HCT116 (cell line): ENCODE measurements at regions of chr19 and their contacts with region 1.

Region 1: GRCh38 chr19:18588611-18589379 is at the start of gene REX1BD:
- DNase-seq: no peak
- ATAC-seq: peak; percentile 71
- H3K4me3 ChIP-seq: peak within 1 kb of the TSS; percentile 67 to 89
- H3K27ac ChIP-seq: peak within 1 kb of the TSS; percentile 100
- H3K4me1 ChIP-seq: peaks cover 15 to 33% of the 10 kb centered on the region in 2 experiments
- H3K27me3 ChIP-seq: no peaks in the 10 kb centered on the region
- CTCF ChIP-seq: peak; percentile 72 to 93 (median 85)
- POLR2A ChIP-seq: peak; percentile 58
- RAD21 ChIP-seq: peak; percentile 38; the same call in 1 of the 2 replicates
- total RNA-seq, gene REX1BD: 97.1 TPM

Region 2: GRCh38 chr19:18521885-18522624 is 66.7 kb before region 1 on chr19 and contains the start of gene ELL:
- CTCF ChIA-PET with region 1: interaction called, 6 read pairs
- POLR2A ChIA-PET with region 1: no interaction called
- RAD21 ChIA-PET with region 1: no interaction called
- intact Hi-C with region 1: loop called (anchors 1 kb)
- DNase-seq: peak; percentile 99
- ATAC-seq: peak; percentile 89
- H3K4me3 ChIP-seq: peak within 1 kb of the TSS; percentile 92 to 94
- H3K27ac ChIP-seq: peak within 1 kb of the TSS; percentile 95
- H3K4me1 ChIP-seq: peaks cover 14 to 33% of the 10 kb centered on the region in 2 experiments
- H3K27me3 ChIP-seq: no peaks in the 10 kb centered on the region
- CTCF ChIP-seq: no peak
- POLR2A ChIP-seq: peak; percentile 68
- RAD21 ChIP-seq: no peak
- total RNA-seq, gene ELL: 22.9 TPM

Region 3: DNA sequence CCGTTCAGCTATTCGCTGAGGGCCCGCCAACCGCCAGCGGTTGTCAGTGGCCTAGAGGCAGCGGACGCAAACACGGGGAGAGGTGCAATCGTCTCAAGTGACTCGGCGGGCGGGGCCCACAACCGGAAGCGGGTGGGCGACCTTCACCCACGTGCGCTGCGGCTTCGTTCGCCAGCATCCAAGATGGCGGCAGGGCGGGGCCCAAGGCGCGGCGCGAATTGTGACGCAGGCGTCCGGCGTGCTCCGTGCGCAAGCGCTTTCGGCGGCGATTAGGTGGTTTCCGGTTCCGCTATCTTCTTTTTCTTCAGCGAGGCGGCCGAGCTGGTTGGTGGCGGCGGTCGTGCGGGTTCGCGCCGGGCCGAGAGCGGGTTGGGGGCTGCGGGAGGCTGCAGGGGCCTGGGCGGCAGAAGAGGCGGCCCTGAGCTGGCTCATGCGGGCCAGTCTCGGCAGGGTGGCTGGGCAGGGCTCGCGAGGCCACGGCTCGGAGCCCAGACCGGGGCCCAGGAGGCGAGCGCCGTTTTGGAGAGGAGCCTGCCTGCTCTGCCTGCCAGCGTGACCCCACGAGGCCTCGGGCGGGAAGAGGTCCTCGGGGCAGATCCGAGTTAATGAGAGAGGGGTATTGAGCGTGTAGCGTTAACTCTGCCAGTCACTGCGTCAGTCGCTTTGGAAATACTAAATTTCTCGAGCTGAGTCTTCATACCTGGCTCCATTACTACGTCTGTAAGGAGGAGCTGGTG is 17.1 kb before region 1 on chr19 and contains the start of gene UBA52:
- CTCF ChIA-PET with region 1: interaction called, 14 read pairs
- POLR2A ChIA-PET with region 1: interaction called, 23 read pairs
- RAD21 ChIA-PET with region 1: interaction called in 1 of 2 experiments, 4 read pairs
- intact Hi-C with region 1: no loop called
- DNase-seq: peak; percentile 96
- ATAC-seq: peak; percentile 92
- H3K4me3 ChIP-seq: peak within 1 kb of the TSS; percentile 100
- H3K27ac ChIP-seq: peak within 1 kb of the TSS; percentile 94
- H3K4me1 ChIP-seq: peaks cover 12 to 28% of the 10 kb centered on the region in 2 experiments
- H3K27me3 ChIP-seq: no peaks in the 10 kb centered on the region
- CTCF ChIP-seq: no peak
- POLR2A ChIP-seq: peak; percentile 90
- RAD21 ChIP-seq: peak; percentile 18; the same call in 1 of the 2 replicates
- total RNA-seq, gene UBA52: 1,743 TPM

Region 4: DNA sequence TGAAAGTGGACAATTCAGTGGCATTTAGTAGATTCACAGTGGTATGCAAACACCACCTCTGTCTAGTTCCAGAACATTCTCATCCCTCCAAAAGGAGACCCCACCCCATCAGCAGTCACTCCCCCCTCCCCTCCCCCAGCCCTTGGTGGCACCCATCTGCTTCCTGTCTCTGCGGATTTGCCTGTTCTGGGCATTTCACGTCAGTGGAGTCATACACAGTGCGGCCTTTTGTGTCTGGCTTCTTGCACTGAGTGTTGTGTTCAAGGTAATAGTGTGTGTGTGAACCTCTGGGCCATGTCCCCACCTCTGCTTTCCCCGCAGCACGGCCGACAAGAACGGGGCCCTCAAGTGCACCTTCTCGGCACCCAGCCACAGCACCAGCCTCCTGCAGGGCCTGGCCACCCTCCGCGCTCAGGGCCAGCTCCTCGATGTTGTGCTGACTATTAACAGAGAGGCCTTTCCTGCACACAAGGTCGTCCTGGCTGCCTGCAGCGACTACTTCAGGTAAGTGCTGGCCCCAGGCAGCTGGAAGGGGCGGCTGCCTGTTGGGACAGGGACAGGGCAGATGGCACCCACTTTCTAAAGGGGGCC is 75.2 kb after region 1 on chr19:
- CTCF ChIA-PET with region 1: no interaction called
- POLR2A ChIA-PET with region 1: no interaction called
- RAD21 ChIA-PET with region 1: no interaction called
- intact Hi-C with region 1: no loop called
- DNase-seq: no peak
- ATAC-seq: no peak
- H3K4me3 ChIP-seq: no peak overlapping the region
- H3K27ac ChIP-seq: no peak overlapping the region
- H3K4me1 ChIP-seq: peaks cover 16 to 26% of the 10 kb centered on the region in 2 experiments
- H3K27me3 ChIP-seq: no peaks in the 10 kb centered on the region
- CTCF ChIP-seq: no peak
- POLR2A ChIP-seq: no peak
- RAD21 ChIP-seq: no peak

Region 5: DNA sequence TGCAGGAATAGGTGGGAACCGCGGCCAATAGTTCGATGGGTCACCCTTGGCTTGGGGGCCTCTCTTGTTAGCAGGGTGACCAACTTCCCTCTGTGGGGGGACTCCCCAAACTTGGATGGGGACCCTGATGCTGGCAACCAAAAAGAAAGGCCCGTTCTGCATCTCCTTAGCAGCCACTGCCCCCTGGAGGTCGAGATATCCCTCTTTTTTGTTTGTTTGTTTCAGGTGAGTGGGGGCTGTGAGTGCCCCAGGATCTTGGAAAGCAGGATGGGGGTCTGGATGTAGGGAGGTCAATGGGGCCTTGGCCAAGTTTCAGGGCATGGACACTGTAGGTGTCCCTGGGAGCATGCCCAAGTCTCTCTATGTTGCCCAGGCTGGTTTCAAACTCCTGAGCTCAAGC is 87.0 kb after region 1 on chr19:
- CTCF ChIA-PET with region 1: interaction called, 7 read pairs
- POLR2A ChIA-PET with region 1: interaction called, 4 read pairs
- RAD21 ChIA-PET with region 1: interaction called in 1 of 2 experiments, 4 read pairs
- intact Hi-C with region 1: loop called (anchors 2 kb)
- DNase-seq: peak; percentile 10
- ATAC-seq: no peak
- H3K4me3 ChIP-seq: no peak overlapping the region
- H3K27ac ChIP-seq: no peak overlapping the region
- H3K4me1 ChIP-seq: peaks cover 18 to 29% of the 10 kb centered on the region in 2 experiments
- H3K27me3 ChIP-seq: no peaks in the 10 kb centered on the region
- CTCF ChIP-seq: peak in 2 of 3 experiments; percentile 60 to 72; a peak in 5 of 6 replicates
- POLR2A ChIP-seq: no peak
- RAD21 ChIP-seq: peak; percentile 83